A673 (cell line): ENCODE measurements at regions of chr19 and their contacts with region 1.

Region 1: DNA sequence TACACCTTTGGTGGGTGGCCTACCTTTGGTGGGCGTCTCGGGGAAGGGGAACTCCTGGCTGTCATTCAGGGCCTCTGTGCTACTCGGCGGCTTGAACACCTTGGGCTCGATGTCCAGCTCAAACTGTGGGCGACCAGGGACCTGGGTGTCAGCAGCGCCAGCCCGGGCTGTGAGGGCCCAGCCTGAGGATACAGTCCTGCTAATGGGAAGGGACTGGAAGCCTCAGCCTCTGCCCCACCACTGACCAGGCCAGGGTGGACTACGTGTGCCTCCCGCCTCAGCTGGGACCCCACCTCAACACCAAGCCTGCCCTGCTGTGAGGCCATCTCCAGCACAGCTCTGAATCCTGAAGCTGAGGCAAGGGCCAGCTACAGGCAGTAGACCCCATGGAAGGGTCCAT is 7.7 kb downstream of the TMEM259 start:
- DNase-seq: no peak
- H3K4me3 ChIP-seq: no peak overlapping the region
- H3K27ac ChIP-seq: no peak overlapping the region
- H3K4me1 ChIP-seq: peaks cover 30% of the 10 kb centered on the region
- H3K27me3 ChIP-seq: no peaks in the 10 kb centered on the region
- CTCF ChIP-seq: no peak

Region 2: DNA sequence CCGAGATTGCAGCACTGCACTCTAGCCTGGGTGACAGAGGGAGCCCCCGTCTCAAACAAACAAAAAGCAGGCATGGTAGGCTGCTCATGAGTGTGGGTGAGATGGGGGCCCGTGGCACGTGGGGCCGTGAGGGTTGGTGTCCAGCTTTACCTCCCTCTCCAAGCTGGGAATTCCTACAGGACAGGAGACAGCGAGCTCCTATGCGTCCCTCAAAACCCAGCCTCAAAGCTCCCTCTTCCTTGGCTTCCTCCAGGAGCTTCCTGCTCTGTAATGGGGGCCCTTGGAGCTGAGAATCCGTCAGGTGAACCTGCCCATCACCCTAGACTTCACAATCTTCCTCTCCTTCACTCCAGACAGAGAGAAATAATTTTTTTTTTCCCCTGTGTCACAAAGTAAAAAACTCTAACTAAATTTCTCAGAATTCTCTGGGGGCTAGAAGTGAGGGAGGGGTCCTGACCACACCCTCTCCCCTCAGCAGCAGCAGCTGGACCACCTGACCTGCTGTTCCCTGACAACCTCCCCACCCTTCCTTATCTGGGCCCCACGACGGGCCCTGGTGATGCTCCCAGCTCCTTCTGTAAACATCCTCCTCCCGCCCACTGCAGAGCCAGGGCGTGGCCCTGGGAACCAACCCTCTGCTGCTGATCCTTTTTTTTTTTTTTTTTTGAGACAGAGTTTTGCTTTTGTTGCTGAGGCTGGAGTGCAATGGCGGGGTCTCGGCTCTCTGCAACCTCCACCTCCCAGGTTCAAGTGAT is 51.2 kb before region 1 on chr19:
- CTCF ChIA-PET with region 1: no interaction called
- POLR2A ChIA-PET with region 1: no interaction called
- intact Hi-C with region 1: no loop called
- DNase-seq: no peak
- H3K4me3 ChIP-seq: no peak overlapping the region
- H3K27ac ChIP-seq: no peak overlapping the region
- H3K4me1 ChIP-seq: no peaks in the 10 kb centered on the region
- H3K27me3 ChIP-seq: no peaks in the 10 kb centered on the region
- CTCF ChIP-seq: no peak

Region 3: DNA sequence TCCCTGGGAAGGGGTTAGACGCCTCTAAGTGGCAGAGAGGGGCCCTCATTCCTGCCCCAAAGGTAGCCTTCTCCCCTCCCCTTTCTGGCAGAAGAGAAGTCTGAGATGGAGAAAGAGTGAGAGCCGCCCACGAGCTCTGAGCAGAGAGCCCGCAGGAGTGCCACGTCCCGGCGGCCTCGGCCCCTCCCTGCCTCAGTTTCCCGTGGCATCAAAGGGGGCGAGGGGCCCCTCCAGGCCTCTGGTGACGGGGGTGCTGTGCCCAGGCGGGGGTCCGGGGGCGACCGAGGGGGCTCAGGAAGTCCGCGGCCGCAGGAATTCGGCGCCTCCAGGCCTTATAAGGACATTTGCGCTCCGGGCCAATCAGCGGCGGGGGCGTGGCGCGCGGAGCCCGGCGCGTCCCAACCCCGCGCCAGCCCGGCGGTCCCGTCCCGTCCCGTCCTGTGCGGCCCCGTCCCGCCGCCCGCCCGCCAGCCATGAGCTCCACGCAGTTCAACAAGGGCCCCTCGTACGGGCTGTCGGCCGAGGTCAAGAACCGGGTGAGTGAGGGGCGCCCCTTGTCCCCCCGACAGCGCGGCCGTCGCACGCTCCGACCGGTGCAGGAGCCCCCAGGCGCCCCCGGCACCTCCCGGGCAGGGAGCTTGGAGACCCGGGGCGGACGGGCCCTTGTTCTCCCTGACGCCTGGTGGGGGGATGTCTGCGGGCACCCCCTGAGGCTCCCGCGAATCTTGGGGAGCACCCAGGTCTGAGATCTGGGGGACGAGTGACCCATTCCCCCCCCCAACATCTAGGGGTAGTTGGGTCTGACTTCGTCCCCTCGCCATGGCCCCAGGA is 13.2 kb after region 1 on chr19 and contains the start of gene CNN2:
- CTCF ChIA-PET with region 1: no interaction called
- POLR2A ChIA-PET with region 1: interaction called, 14 read pairs
- intact Hi-C with region 1: no loop called
- DNase-seq: peak; percentile 87
- H3K4me3 ChIP-seq: peak within 1 kb of the TSS; percentile 92
- H3K27ac ChIP-seq: peak within 1 kb of the TSS; percentile 99
- H3K4me1 ChIP-seq: no peaks in the 10 kb centered on the region
- H3K27me3 ChIP-seq: no peaks in the 10 kb centered on the region
- CTCF ChIP-seq: no peak
- total RNA-seq, gene CNN2: 112 and 146 TPM in 2 replicates